Panc1 (cell line): ENCODE measurements at regions of chr2 and their contacts with region 1.

Region 1: GRCh38 chr2:168118733-168119514 is 128.5 kb downstream of the STK39 start:
- DNase-seq: peak; percentile 30
- ATAC-seq: peak; percentile 77
- H3K4me3 ChIP-seq: no peak overlapping the region
- H3K27ac ChIP-seq: no peak overlapping the region
- H3K4me1 ChIP-seq: no peaks in the 10 kb centered on the region
- H3K27me3 ChIP-seq: no peaks in the 10 kb centered on the region
- CTCF ChIP-seq: peak; percentile 72

Region 2: DNA sequence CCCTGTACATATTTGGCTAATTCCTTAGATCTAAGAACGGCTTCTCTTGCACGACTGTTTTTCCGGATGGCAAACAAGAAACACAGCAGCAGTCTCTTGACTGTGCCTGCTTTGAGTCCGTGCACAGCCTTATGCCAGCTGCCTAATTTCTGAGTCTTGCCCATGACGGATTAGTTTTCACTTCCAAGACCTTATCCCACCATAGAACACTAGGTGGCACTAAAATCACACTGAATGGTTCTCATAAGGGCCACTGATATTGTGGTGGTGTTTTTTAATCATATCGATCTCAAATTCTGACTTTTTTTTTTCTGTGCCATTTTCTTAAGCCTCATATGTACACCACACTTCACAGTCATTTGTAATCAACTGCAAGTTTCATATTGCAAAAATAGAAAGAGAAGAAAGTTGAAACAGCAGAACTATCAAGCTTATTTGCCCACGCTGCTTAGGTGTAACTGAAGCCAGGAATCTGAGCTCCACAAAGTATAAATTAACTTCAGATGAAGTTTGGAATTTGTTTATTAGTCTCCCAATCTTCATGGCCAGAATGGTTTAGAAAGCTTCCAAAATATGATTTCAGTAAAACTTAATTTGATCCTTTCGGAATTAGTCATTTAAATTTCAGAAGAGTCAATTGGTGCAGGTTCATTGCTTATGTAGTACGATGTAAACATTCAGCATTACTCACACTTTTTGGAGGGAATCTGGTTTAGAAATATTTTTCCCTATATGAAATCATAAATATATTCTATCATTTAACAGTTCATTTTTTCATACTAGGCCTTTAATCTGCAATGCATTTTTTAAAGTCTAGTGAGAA is 1579.4 kb before region 1 on chr2:
- CTCF ChIA-PET with region 1: no interaction called
- POLR2A ChIA-PET with region 1: no interaction called
- in situ Hi-C with region 1: no loop called
- intact Hi-C with region 1: loop called (anchors 1 kb)
- DNase-seq: peak; percentile 35
- ATAC-seq: peak; percentile 87
- H3K4me3 ChIP-seq: no peak overlapping the region
- H3K27ac ChIP-seq: no peak overlapping the region
- H3K4me1 ChIP-seq: no peaks in the 10 kb centered on the region
- H3K27me3 ChIP-seq: no peaks in the 10 kb centered on the region
- CTCF ChIP-seq: peak; percentile 83

Region 3: GRCh38 chr2:167264380-167264779 is 854.5 kb before region 1 on chr2:
- CTCF ChIA-PET with region 1: interaction called, 23 read pairs
- POLR2A ChIA-PET with region 1: no interaction called
- in situ Hi-C with region 1: no loop called
- intact Hi-C with region 1: no loop called
- DNase-seq: no peak
- ATAC-seq: peak; percentile 62; the same call in 1 of the 2 replicates
- H3K4me3 ChIP-seq: no peak overlapping the region
- H3K27ac ChIP-seq: no peak overlapping the region
- H3K4me1 ChIP-seq: no peaks in the 10 kb centered on the region
- H3K27me3 ChIP-seq: no peaks in the 10 kb centered on the region
- CTCF ChIP-seq: peak; percentile 69

Region 4: DNA sequence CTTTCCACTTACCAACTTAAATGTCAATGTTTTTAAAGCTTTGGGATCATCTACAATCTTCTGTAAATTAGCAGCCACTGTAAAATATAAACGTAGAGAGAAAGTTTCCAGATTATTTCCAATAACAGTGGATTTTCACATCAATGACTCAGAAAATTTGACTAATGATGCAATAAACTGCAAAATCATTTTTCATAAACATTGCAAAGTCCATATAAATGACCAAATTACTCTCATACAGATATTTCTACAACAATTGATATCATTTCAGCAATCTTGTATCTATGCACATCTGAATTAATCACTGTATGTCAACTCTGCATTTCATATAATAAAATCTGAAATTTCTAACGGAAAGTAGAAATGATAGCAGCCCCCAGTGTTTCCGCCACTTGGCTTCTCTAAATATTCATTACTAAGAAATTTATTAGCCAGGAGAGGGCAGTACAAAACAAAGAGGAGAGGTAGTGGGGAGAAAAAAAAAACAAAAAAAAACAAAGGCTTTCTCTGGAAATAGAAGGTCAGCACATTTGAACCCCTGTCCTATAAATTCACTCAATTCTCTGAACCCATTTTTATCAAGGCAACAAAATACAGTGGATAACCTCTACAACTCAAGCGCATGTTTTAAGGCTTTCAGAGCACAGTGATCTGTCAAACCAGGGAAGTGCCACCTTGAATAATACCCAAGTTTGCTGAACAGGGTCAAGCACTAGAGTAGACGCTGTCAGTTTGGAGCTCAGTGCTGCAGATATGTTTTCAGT is 154.1 kb before region 1 on chr2:
- CTCF ChIA-PET with region 1: no interaction called
- POLR2A ChIA-PET with region 1: no interaction called
- in situ Hi-C with region 1: no loop called
- intact Hi-C with region 1: loop called (anchors 5 kb)
- DNase-seq: no peak
- ATAC-seq: no peak
- H3K4me3 ChIP-seq: no peak overlapping the region
- H3K27ac ChIP-seq: no peak overlapping the region
- H3K4me1 ChIP-seq: no peaks in the 10 kb centered on the region
- H3K27me3 ChIP-seq: no peaks in the 10 kb centered on the region
- CTCF ChIP-seq: peak; percentile 44; the same call in 1 of the 2 replicates

Region 5: DNA sequence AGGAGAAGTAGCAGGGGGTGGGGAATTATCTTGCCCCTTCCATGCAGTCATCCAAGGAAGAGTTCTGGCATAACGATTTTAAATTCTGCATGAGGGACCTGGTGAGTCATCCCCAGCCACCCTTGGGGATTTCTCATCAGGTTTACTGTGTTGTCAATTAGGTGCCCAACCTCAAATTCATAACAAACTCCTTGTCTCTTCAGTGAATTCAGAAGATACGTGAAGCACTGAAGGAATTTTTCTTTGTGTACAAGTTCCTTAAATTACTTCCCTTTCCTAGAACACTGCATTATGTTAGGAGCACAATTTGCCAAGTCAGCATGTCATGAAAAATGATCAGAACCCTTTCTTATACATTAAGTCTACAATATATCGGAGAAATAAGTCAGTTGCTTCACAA is 612.7 kb after region 1 on chr2:
- CTCF ChIA-PET with region 1: no interaction called
- POLR2A ChIA-PET with region 1: no interaction called
- in situ Hi-C with region 1: no loop called
- intact Hi-C with region 1: no loop called
- DNase-seq: no peak
- ATAC-seq: no peak
- H3K4me3 ChIP-seq: no peak overlapping the region
- H3K27ac ChIP-seq: no peak overlapping the region
- H3K4me1 ChIP-seq: no peaks in the 10 kb centered on the region
- H3K27me3 ChIP-seq: no peaks in the 10 kb centered on the region
- CTCF ChIP-seq: no peak